ENCODE measurements at regions of chr1 and their contacts with region 1.

Region 1: DNA sequence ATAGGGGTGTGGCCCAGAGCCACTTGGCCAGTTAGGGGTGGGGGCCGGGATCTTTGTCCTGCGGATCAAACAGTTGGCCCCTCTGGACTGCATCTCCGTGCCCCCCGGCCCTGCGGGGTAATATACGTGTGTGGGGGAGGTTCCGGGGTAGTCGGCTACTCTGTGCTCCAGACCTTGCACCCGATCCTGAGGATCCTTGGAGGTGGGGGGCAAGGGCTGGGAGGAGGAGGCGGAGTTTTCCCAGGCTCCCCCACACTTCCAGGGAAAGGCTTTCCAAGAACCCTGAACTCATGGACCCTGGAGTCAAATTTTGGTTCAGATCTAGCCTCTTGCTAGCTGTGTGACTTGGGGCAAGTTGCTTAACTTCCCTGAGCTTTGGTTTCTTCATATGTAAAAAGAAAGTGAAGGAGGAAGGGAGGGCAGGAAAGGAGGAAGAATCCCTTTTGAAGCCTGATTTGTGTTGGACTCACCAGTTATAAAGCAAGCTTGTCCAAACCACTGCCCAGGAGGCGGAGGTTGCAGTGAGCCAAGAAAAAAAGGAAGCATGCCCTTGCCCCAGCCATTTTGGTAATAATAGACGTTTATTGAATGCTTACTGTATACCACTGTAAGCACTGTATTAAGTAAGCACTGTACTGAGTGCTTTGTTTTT is 686 bp downstream of the MIIP start:
- DNase-seq: peak in 1 of 5 donors; percentile 5
- H3K4me3 ChIP-seq: peak overlapping the region; percentile 19 to 74
- H3K4me3 Mint-ChIP-seq: peak overlapping the region; percentile 89 to 96 (median 92)
- H3K27ac ChIP-seq: peak overlapping the region; percentile 74
- H3K27ac Mint-ChIP-seq: peak overlapping the region; percentile 29 to 96 (median 57)
- H3K4me1 ChIP-seq: peaks cover 17% of the 10 kb centered on the region
- H3K4me1 Mint-ChIP-seq: peaks cover 6 to 32% (median 12%) of the 10 kb centered on the region in 4 donors
- H3K27me3 ChIP-seq: no peaks in the 10 kb centered on the region
- H3K27me3 Mint-ChIP-seq: no peaks in the 10 kb centered on the region

Region 2: DNA sequence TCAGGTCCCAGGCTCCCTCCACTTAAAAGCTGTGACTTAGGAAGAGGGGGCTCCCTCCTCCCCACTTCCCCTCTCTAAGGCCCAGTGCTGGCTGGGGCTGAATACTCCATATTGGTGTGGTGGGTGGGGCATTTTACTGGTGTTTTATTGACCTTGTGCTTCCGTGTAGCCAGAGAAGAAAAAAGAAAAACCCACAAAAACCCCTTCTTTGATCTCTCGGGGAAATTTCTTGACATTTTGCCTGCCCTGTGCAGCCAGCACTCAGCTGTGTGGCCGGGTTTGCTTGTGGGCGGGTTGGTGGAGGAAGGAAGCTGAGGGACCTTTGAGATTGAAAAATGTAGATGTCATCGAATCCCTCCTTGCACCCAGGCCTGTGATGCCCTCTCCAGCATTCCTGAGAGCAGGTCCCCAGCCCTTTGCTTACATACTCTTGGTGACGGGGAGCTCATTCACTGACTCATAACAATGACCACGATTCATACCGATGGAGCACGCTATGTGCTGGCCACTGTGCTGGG is 67.9 kb after region 1 on chr1:
- CTCF ChIA-PET with region 1: no interaction called
- POLR2A ChIA-PET with region 1: interaction called, 14 read pairs
- intact Hi-C with region 1: no loop called
- DNase-seq: peak; percentile 56 to 68 (median 60)
- H3K4me3 ChIP-seq: peak overlapping the region; percentile 12 to 47
- H3K4me3 Mint-ChIP-seq: peak overlapping the region; percentile 60 to 84 (median 78)
- H3K27ac ChIP-seq: peak overlapping the region; percentile 50
- H3K27ac Mint-ChIP-seq: peak overlapping the region; percentile 77 to 95 (median 90)
- H3K4me1 ChIP-seq: peaks cover 47% of the 10 kb centered on the region
- H3K4me1 Mint-ChIP-seq: peaks cover 39 to 54% (median 44%) of the 10 kb centered on the region in 4 donors
- H3K27me3 ChIP-seq: no peaks in the 10 kb centered on the region
- H3K27me3 Mint-ChIP-seq: no peaks in the 10 kb centered on the region

Region 3: GRCh38 chr1:12229835-12230548 is 210.0 kb after region 1 on chr1 and contains the start of gene VPS13D:
- CTCF ChIA-PET with region 1: no interaction called
- POLR2A ChIA-PET with region 1: no interaction called
- intact Hi-C with region 1: loop called (anchors 1 kb)
- DNase-seq: peak; percentile 76 to 84 (median 83)
- H3K4me3 ChIP-seq: peak within 1 kb of the TSS; percentile 86 to 90
- H3K4me3 Mint-ChIP-seq: peak within 1 kb of the TSS; percentile 88 to 93 (median 91)
- H3K27ac ChIP-seq: peak within 1 kb of the TSS; percentile 82
- H3K27ac Mint-ChIP-seq: peak within 1 kb of the TSS in 6 of 7 donors; percentile 81 to 94 (median 92)
- H3K4me1 ChIP-seq: peaks cover 48% of the 10 kb centered on the region
- H3K4me1 Mint-ChIP-seq: peaks cover 13 to 27% (median 22%) of the 10 kb centered on the region in 4 donors
- H3K27me3 ChIP-seq: no peaks in the 10 kb centered on the region
- H3K27me3 Mint-ChIP-seq: no peaks in the 10 kb centered on the region
- total RNA-seq, gene VPS13D: 92.7 to 96.3 TPM